ENCODE measurements at regions of chr6 and their contacts with region 1.

Region 1: GRCh38 chr6:17156112-17156921 is 54.5 kb downstream of the STMND1 start:
- DNase-seq: peak; percentile 86
- ATAC-seq: peak; percentile 77

Region 2: GRCh38 chr6:15901141-15902115 is 1254.9 kb before region 1 on chr6:
- intact Hi-C with region 1: no loop called
- DNase-seq: no peak
- ATAC-seq: peak; percentile 37

Region 3: GRCh38 chr6:17584241-17584803 is 428.0 kb after region 1 on chr6:
- intact Hi-C with region 1: loop called (anchors 10 kb)
- DNase-seq: no peak
- ATAC-seq: peak; percentile 96

Region 4: GRCh38 chr6:17808609-17809008 is 652.3 kb after region 1 on chr6:
- intact Hi-C with region 1: loop called (anchors 10 kb)
- DNase-seq: no peak
- ATAC-seq: no peak

Measured in sciatic nerve (tissue), 2 donors.